Activated naive CD4-positive, alpha-beta T cell treated with anti-CD3 and anti-CD28 coated beads for 36 hours (primary cell): ENCODE measurements at regions of chr12 and their contacts with region 1.

Region 1: DNA sequence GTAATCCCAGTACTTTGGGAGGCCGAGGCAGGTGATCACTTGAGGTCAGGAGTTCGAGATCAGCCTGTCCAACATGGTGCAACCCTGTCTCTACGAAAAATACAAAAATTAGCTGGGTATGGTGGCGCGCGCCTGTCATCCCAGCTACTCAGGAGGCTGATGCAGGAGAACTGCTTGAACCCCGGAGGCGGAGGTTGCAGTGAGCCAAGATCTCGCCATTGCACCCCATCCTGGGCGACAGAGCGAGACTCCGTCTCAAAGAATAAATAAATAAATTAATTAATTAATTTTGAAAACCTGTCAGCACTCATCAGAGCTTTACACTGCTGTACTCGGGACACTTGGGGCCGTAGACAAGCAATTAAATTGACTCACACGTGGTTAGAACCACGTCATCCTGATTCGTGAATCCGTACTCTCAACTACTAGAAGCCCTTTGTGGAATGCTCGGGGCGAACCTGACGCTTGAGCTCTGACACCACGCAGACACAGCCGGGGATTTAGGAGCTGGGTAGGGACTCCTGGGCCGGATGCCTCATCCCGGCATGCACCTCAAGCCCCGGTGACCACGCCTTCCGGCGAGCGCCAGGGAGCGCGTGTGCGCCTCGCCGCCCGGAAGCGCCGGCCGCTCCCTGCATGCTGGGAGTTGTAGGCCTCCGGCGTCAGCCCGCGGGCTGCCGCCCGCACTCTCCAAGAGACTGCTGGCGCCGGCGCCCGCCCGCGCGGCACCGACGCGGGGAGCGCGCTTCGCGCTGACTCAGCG is at the start of gene XPOT:
- DNase-seq: peak; percentile 94
- H3K4me3 Mint-ChIP-seq: peak within 1 kb of the TSS; percentile 95
- H3K27ac Mint-ChIP-seq: peak within 1 kb of the TSS; percentile 97
- H3K4me1 Mint-ChIP-seq: peaks cover 28% of the 10 kb centered on the region
- H3K27me3 Mint-ChIP-seq: no peaks in the 10 kb centered on the region
- total RNA-seq, gene XPOT: 227 to 236 TPM

Region 2: DNA sequence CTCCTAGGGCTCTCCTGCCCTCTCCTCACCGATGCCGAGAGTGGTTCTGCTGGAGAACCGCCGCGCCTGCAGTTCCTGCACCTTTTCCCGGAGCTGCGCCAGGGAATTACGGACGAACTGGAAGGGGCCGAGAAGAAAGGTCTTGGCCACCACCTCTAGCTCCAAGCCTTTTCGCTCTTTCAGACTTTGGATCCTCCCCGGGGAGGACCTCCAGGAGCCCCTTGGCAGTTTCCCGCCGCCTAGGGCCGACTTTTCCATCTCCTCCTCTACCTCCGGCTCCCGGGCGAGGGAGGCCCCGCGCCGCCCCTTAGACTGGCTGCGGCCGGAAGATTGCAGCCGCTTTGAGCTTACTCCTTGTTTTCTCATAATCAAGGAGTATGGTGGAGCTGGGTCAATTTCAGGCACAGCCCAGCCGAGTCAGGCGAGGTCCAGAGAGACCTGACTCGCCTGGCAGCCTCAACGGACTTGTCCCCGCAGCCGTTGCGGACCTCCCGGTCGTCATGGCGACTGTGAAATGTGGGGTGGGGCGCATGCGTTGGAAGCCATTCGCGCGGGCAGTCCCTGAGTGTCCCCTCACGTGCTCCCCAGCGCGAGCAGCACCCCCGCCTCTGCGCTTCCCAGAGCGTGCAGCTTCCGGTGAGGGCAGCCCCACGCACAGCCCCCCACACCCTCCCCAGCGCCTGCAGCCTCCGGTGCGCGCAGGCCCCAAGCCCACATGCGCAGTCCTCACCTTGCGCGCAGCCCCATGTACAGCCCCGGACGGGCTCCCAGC is 735.7 kb before region 1 on chr12 and contains the start of gene DPY19L2:
- CTCF ChIA-PET with region 1: no interaction called
- intact Hi-C with region 1: loop called (anchors 5 kb)
- DNase-seq: peak; percentile 69
- H3K4me3 Mint-ChIP-seq: peak within 1 kb of the TSS; percentile 79
- H3K27ac Mint-ChIP-seq: peak within 1 kb of the TSS; percentile 36
- H3K4me1 Mint-ChIP-seq: peaks cover 10% of the 10 kb centered on the region
- H3K27me3 Mint-ChIP-seq: peaks cover 29% of the 10 kb centered on the region
- total RNA-seq, gene DPY19L2: 0.91 to 1.1 TPM

Region 3: DNA sequence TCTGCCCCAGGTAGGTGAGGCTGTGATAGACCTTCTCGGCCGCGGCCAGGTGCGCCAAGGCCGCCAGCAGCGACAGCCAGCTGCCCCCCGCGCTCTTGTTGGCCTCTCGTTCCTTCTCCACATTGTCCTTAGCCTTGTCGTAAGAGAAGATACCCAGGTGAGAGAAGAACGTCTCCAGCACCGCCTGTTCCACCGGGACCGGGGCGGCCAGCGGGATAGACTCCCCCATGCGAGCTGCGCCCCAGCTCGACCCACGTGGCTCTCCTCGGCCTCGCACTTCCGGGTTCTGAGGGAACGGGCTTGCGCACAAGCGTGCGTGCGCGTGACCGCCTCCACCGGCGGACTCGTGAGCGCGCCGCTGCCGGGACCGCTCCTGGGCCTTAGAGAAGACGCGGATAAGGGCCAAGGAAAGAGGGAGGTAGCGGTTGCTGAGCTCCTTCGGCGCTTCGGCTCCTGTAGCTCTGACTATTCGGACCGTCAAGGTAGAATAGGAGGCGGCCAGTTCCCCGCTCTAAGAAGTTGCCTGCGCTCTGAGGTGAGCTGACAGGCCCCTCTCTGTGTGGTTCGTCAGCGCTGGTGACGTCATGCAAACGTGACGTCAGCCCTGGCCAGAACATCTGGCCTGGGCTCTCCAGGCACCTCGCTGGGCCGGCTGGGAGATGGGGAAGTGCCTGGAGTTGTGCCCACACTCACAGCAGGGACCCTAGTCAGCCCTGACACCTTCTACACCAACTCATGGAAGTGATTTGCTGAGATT is 181.7 kb before region 1 on chr12 and contains the start of gene KICS2:
- CTCF ChIA-PET with region 1: no interaction called
- intact Hi-C with region 1: loop called (anchors 1 kb)
- DNase-seq: peak; percentile 92
- H3K4me3 Mint-ChIP-seq: peak within 1 kb of the TSS; percentile 92
- H3K27ac Mint-ChIP-seq: peak within 1 kb of the TSS; percentile 91
- H3K4me1 Mint-ChIP-seq: peaks cover 26% of the 10 kb centered on the region
- H3K27me3 Mint-ChIP-seq: no peaks in the 10 kb centered on the region
- total RNA-seq, gene KICS2: 13.3 to 15.6 TPM

Region 4: GRCh38 chr12:64392221-64392620 is 11.7 kb before region 1 on chr12:
- CTCF ChIA-PET with region 1: interaction called, 6 read pairs
- intact Hi-C with region 1: loop called (anchors 1 kb)
- DNase-seq: peak; percentile 23
- H3K4me3 Mint-ChIP-seq: no peak overlapping the region
- H3K27ac Mint-ChIP-seq: no peak overlapping the region
- H3K4me1 Mint-ChIP-seq: peaks cover 11% of the 10 kb centered on the region
- H3K27me3 Mint-ChIP-seq: no peaks in the 10 kb centered on the region

Region 5: GRCh38 chr12:64459394-64459891 is 55.6 kb after region 1 on chr12:
- CTCF ChIA-PET with region 1: no interaction called
- intact Hi-C with region 1: loop called (anchors 1 kb)
- DNase-seq: peak; percentile 14
- H3K4me3 Mint-ChIP-seq: peak overlapping the region; percentile 72
- H3K27ac Mint-ChIP-seq: peak overlapping the region; percentile 85
- H3K4me1 Mint-ChIP-seq: peaks cover 38% of the 10 kb centered on the region
- H3K27me3 Mint-ChIP-seq: no peaks in the 10 kb centered on the region

Region 6: DNA sequence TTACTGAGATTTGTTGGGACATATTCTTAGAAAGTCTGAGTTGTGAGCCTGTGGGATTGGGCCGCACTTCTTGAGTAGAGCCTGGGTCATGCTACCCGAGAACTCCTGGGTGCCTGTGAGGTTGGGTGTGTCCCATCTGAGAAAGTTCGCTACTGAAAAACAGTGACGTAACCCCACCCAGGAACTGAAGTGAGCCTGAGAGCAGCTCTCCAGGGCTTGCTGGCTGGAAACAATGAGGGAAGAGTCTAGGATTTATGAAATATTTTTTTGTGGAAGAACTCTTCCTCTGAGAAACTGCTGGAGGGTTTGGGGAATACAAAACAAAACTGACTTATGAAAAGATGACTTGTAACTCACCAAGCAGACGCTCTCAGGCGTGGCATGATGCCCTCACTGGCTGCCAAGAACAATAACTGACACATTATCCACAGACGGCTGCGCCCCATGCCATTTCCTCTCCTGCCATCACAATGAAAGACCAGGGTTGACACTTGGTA is 275.6 kb after region 1 on chr12:
- CTCF ChIA-PET with region 1: no interaction called
- intact Hi-C with region 1: loop called (anchors 5 kb)
- DNase-seq: peak; percentile 72
- H3K4me3 Mint-ChIP-seq: peak overlapping the region; percentile 53
- H3K27ac Mint-ChIP-seq: peak overlapping the region; percentile 89
- H3K4me1 Mint-ChIP-seq: peaks cover 95% of the 10 kb centered on the region
- H3K27me3 Mint-ChIP-seq: no peaks in the 10 kb centered on the region

Region 7: GRCh38 chr12:64759035-64759901 is 355.4 kb after region 1 on chr12 and contains the start of gene GNS:
- CTCF ChIA-PET with region 1: no interaction called
- intact Hi-C with region 1: loop called (anchors 1 kb)
- DNase-seq: peak; percentile 98
- H3K4me3 Mint-ChIP-seq: peak within 1 kb of the TSS; percentile 83
- H3K27ac Mint-ChIP-seq: peak within 1 kb of the TSS; percentile 85
- H3K4me1 Mint-ChIP-seq: peaks cover 41% of the 10 kb centered on the region
- H3K27me3 Mint-ChIP-seq: no peaks in the 10 kb centered on the region
- total RNA-seq, gene GNS: 14.3 to 14.6 TPM